ENCODE measurements at regions of chr10 and their contacts with region 1.

Region 1: DNA sequence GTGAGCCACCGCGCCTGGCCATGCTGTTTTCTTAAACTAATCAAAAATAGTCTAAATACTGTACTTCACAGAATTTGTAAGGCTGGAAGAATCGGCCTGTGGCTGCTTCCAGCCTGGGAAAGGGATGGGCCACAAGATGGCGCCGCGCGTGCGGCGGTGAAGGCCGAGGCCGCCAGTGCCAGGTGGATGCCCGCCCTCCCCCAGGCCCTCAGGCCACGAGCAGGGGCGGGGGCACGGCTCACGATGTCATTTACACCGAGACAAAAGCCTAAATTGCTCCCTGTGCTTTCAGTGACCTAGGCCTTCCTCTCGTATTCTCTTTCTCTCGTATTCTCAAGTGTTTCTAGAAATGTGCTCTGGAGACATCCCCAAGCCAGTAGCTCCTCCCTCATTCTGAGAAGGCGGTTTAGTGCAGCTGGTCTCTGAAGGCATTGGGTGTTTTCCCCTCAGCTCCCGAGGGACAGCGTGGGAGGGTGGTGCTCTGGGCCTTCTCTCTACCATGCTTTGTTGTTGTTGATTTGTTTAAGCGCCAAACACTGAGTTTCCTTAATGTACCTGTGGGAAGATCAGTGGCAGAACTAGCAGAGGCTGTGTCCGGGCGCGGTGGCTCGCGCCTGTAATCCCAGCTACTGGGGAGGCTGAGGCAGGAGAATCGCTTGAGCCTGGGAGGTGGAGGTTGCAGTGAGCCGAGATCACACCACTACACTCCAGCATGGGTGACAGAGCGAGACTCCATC is 68.4 kb downstream of the CDC123 start:
- DNase-seq: peak; percentile 88
- ATAC-seq: peak; percentile 96
- H3K4me3 Mint-ChIP-seq: peak overlapping the region; percentile 60
- H3K27ac Mint-ChIP-seq: peak overlapping the region; percentile 98
- H3K4me1 Mint-ChIP-seq: peaks cover 12% of the 10 kb centered on the region
- H3K27me3 Mint-ChIP-seq: no peaks in the 10 kb centered on the region; the same call in 1 of the 2 replicates
- CTCF ChIP-seq: peak; percentile 46

Region 2: GRCh38 chr10:12484941-12485805 is 220.8 kb after region 1 on chr10:
- CTCF ChIA-PET with region 1: interaction called, 12 read pairs
- POLR2A ChIA-PET with region 1: no interaction called
- DNase-seq: peak; percentile 43
- ATAC-seq: peak; percentile 78
- H3K4me3 Mint-ChIP-seq: no peak overlapping the region
- H3K27ac Mint-ChIP-seq: peak overlapping the region; percentile 74
- H3K4me1 Mint-ChIP-seq: peaks cover 44% of the 10 kb centered on the region
- H3K27me3 Mint-ChIP-seq: no peaks in the 10 kb centered on the region; the same call in 1 of the 2 replicates
- CTCF ChIP-seq: no peak

Region 3: GRCh38 chr10:12656518-12657142 is 392.3 kb after region 1 on chr10:
- CTCF ChIA-PET with region 1: interaction called, 45 read pairs
- POLR2A ChIA-PET with region 1: no interaction called
- DNase-seq: no peak
- ATAC-seq: peak; percentile 52
- H3K4me3 Mint-ChIP-seq: no peak overlapping the region
- H3K27ac Mint-ChIP-seq: no peak overlapping the region
- H3K4me1 Mint-ChIP-seq: no peaks in the 10 kb centered on the region
- H3K27me3 Mint-ChIP-seq: no peaks in the 10 kb centered on the region
- CTCF ChIP-seq: peak; percentile 47; the same call in 1 of the 2 replicates

Region 4: GRCh38 chr10:12710594-12711349 is 446.4 kb after region 1 on chr10:
- CTCF ChIA-PET with region 1: interaction called, 11 read pairs
- POLR2A ChIA-PET with region 1: no interaction called
- DNase-seq: peak; percentile 79
- ATAC-seq: peak; percentile 77
- H3K4me3 Mint-ChIP-seq: no peak overlapping the region
- H3K27ac Mint-ChIP-seq: no peak overlapping the region
- H3K4me1 Mint-ChIP-seq: peaks cover 42% of the 10 kb centered on the region
- H3K27me3 Mint-ChIP-seq: peaks cover 5% of the 10 kb centered on the region
- CTCF ChIP-seq: peak; percentile 73

Measured in WTC11 (cell line).